CD4-positive, alpha-beta T cell (primary cell): ENCODE measurements at regions of chr1 and their contacts with region 1.

Region 1: GRCh38 chr1:161399257-161399998 is 31.8 kb upstream of the CFAP126 start:
- DNase-seq: peak; percentile 88 to 97 (median 93)
- ATAC-seq: peak; percentile 85
- H3K4me3 ChIP-seq: peak overlapping the region; percentile 87
- H3K4me3 Mint-ChIP-seq: peak overlapping the region; percentile 97
- H3K27ac ChIP-seq: peak overlapping the region; percentile 95 to 98
- H3K27ac Mint-ChIP-seq: peak overlapping the region; percentile 99
- H3K4me1 ChIP-seq: peaks cover 25% of the 10 kb centered on the region
- H3K4me1 Mint-ChIP-seq: peaks cover 23% of the 10 kb centered on the region
- H3K27me3 ChIP-seq: no peaks in the 10 kb centered on the region
- H3K27me3 Mint-ChIP-seq: peaks cover 29% of the 10 kb centered on the region
- CTCF ChIP-seq: peak; percentile 79

Region 2: DNA sequence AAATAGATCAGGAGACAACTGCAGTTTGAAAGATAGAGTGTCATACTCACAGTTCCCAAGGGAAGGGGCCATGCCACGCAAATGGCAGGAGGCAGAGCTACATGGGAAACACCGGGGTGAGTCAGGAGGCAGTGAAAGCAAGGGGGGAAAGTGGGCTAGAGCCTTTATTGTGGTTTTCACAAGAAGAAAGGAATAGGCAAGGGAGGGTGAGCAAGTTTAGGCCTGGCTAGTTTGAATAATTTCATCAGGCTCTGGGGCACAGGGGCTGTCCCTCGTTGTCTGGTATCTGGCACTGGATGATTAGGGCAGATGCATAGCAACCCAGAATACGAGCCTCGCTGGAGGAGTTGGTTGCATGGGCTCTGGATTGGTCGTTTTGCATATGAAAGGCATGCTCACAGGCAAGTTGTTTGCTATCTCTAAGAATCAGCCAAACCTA is 427.8 kb before region 1 on chr1:
- CTCF ChIA-PET with region 1: no interaction called
- POLR2A ChIA-PET with region 1: no interaction called
- intact Hi-C with region 1: no loop called
- DNase-seq: no peak
- ATAC-seq: no peak
- H3K4me3 ChIP-seq: no peak overlapping the region
- H3K4me3 Mint-ChIP-seq: no peak overlapping the region
- H3K27ac ChIP-seq: no peak overlapping the region
- H3K27ac Mint-ChIP-seq: no peak overlapping the region
- H3K4me1 ChIP-seq: no peaks in the 10 kb centered on the region
- H3K4me1 Mint-ChIP-seq: no peaks in the 10 kb centered on the region
- H3K27me3 ChIP-seq: no peaks in the 10 kb centered on the region
- H3K27me3 Mint-ChIP-seq: peaks cover 21% of the 10 kb centered on the region
- CTCF ChIP-seq: no peak

Region 3: GRCh38 chr1:161427733-161428516 is 28.5 kb after region 1 on chr1:
- CTCF ChIA-PET with region 1: no interaction called
- POLR2A ChIA-PET with region 1: no interaction called
- intact Hi-C with region 1: loop called in 1 of 2 experiments (anchors 2 kb)
- DNase-seq: peak in 4 of 14 experiments; percentile 26 to 45 (median 30)
- ATAC-seq: peak; percentile 78
- H3K4me3 ChIP-seq: no peak overlapping the region
- H3K4me3 Mint-ChIP-seq: peak overlapping the region; percentile 79
- H3K27ac ChIP-seq: no peak overlapping the region
- H3K27ac Mint-ChIP-seq: peak overlapping the region; percentile 87
- H3K4me1 ChIP-seq: no peaks in the 10 kb centered on the region
- H3K4me1 Mint-ChIP-seq: peaks cover 11% of the 10 kb centered on the region
- H3K27me3 ChIP-seq: peaks cover 14 to 16% of the 10 kb centered on the region in 2 experiments
- H3K27me3 Mint-ChIP-seq: peaks cover 73% of the 10 kb centered on the region
- CTCF ChIP-seq: no peak

Region 4: GRCh38 chr1:161531986-161532643 is 132.7 kb after region 1 on chr1:
- CTCF ChIA-PET with region 1: no interaction called
- POLR2A ChIA-PET with region 1: no interaction called
- intact Hi-C with region 1: loop called (anchors 5 to 10 kb)
- DNase-seq: no peak
- ATAC-seq: no peak
- H3K4me3 ChIP-seq: no peak overlapping the region
- H3K4me3 Mint-ChIP-seq: peak overlapping the region; percentile 69
- H3K27ac ChIP-seq: no peak overlapping the region
- H3K27ac Mint-ChIP-seq: peak overlapping the region; percentile 100
- H3K4me1 ChIP-seq: peaks cover 8% of the 10 kb centered on the region
- H3K4me1 Mint-ChIP-seq: peaks cover 25% of the 10 kb centered on the region
- H3K27me3 ChIP-seq: no peaks in the 10 kb centered on the region
- H3K27me3 Mint-ChIP-seq: peaks cover 16% of the 10 kb centered on the region
- CTCF ChIP-seq: no peak

Region 5: DNA sequence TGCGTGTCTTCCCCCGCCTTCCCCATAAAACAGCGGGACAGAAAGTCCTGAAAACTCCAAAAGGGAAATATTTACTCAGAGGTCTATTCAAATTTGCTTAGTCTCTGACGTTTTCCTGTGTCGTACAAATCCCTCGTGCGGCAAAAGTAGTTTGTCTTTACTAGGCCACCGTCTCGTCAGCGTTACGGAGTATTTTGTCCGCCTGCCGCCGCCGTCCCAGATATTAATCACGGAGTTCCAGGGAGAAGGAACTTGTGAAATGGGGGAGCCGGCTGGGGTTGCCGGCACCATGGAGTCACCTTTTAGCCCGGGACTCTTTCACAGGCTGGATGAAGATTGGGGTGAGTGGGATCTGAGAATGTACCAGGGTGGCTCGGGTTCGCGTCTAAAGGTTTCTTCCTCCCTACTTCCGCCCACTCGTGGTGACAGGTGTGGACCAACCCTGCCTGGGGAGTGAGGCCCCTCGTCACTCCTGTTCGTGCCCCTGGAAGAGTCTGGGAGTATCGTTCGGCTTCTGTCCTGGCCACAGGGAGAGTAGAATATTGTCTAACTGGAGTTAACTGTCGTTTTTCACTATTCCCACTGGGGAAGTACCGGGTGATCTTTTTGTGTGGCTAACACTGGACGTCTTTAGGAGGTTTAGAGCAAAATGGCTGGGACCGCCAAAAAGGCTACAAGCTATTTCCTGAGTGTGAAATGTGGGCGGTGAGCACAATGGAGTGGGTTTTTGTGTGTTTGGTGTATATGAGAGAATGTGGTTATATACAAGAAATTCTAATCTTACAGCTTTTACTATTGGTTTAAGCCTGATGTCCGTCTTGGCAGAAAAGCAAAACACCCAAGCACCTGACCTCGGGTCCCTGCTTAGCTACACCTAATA is 366.9 kb after region 1 on chr1 and contains the start of gene ATF6:
- CTCF ChIA-PET with region 1: no interaction called
- POLR2A ChIA-PET with region 1: no interaction called
- intact Hi-C with region 1: no loop called
- DNase-seq: peak; percentile 66 to 90 (median 74)
- ATAC-seq: peak; percentile 69
- H3K4me3 ChIP-seq: peak within 1 kb of the TSS; percentile 70
- H3K4me3 Mint-ChIP-seq: peak within 1 kb of the TSS; percentile 99
- H3K27ac ChIP-seq: peak within 1 kb of the TSS; percentile 76 to 86
- H3K27ac Mint-ChIP-seq: no peak within 1 kb of the TSS
- H3K4me1 ChIP-seq: peaks cover 29% of the 10 kb centered on the region
- H3K4me1 Mint-ChIP-seq: peaks cover 40% of the 10 kb centered on the region
- H3K27me3 ChIP-seq: no peaks in the 10 kb centered on the region
- H3K27me3 Mint-ChIP-seq: no peaks in the 10 kb centered on the region
- CTCF ChIP-seq: no peak
- total RNA-seq, gene ATF6: 16.2 to 17.1 TPM